ENCODE measurements at regions of chr9 and their contacts with region 1.

Region 1: DNA sequence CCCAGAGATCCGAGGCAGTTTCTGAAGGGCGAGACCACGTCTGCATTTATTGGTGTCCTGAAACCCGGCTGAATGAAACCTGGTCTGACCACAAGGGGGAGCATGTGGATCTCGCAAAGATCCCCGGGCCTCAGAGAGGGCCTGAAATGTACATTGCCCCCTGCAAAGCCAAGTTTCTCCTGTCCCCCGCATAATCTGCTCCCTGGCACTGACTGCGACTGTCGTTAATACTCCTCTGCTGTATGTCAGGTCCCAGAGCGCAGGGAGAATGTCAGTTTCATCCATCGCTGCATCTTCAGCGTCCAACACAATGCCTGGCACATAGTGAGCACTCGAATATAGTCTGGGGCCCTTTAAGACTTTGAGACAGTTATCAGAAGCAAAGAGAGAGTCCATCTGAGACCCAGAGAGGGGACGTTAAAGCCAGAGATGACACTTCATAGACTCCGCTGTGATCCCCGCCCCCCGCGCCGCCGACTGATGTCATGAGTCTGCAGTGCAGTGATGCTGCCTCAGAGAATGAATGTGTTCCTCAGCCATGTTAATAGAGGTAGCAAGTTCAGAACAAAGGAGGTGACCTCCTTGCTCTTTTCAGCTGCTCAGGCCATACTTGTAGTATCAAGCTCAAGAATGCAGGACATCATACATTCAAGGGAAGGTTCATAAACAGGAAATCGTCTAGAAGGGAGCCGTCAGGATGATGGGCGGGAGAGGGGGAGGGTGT is 74.5 kb upstream of the BARHL1 start:
- DNase-seq: peak; percentile 35
- ATAC-seq: peak; percentile 82
- H3K4me3 ChIP-seq: no peak overlapping the region
- H3K27ac ChIP-seq: no peak overlapping the region
- H3K4me1 ChIP-seq: no peaks in the 10 kb centered on the region
- H3K27me3 ChIP-seq: peaks cover 9 to 69% of the 10 kb centered on the region in 2 experiments
- CTCF ChIP-seq: peak; percentile 83
- EP300 ChIP-seq: no peak
- POLR2A ChIP-seq: no peak
- RAD21 ChIP-seq: peak; percentile 72

Region 2: GRCh38 chr9:132114102-132114707 is 393.7 kb before region 1 on chr9:
- CTCF ChIA-PET with region 1: no interaction called
- POLR2A ChIA-PET with region 1: no interaction called
- in situ Hi-C with region 1: no loop called
- intact Hi-C with region 1: no loop called
- DNase-seq: peak; percentile 40
- ATAC-seq: peak; percentile 93
- H3K4me3 ChIP-seq: no peak overlapping the region
- H3K27ac ChIP-seq: no peak overlapping the region
- H3K4me1 ChIP-seq: no peaks in the 10 kb centered on the region
- H3K27me3 ChIP-seq: no peaks in the 10 kb centered on the region; a peak in 1 of 5 replicates
- CTCF ChIP-seq: no peak
- EP300 ChIP-seq: no peak
- POLR2A ChIP-seq: no peak
- RAD21 ChIP-seq: no peak

Region 3: DNA sequence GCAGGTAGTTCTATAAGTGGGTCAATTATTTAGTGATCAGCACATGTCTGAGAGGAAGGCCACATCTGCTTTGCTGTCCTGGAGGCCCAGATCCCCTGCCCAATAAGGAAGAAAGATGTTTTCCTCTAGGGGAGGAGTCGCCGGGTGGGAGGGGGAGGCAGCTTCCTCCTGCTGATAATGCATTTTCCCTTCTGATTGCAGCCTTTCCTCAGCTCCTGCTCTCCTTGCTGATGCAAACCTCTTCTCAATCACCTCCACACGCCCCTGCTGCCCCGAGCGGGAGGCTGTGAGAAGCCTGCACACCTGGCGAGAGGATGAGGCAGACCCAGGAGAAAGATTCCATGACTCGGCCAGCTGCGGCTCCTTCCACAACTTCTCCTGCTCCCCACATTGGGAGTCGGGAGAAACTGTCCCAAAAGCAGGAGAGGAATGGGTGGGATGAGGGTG is 353.0 kb before region 1 on chr9:
- CTCF ChIA-PET with region 1: no interaction called
- POLR2A ChIA-PET with region 1: no interaction called
- in situ Hi-C with region 1: no loop called
- intact Hi-C with region 1: no loop called
- DNase-seq: no peak
- ATAC-seq: no peak
- H3K4me3 ChIP-seq: no peak overlapping the region
- H3K27ac ChIP-seq: no peak overlapping the region
- H3K4me1 ChIP-seq: no peaks in the 10 kb centered on the region
- H3K27me3 ChIP-seq: peaks cover 9 to 88% of the 10 kb centered on the region in 2 experiments
- CTCF ChIP-seq: no peak
- EP300 ChIP-seq: no peak
- POLR2A ChIP-seq: no peak
- RAD21 ChIP-seq: no peak

Region 4: GRCh38 chr9:132464547-132464946 is 43.4 kb before region 1 on chr9:
- CTCF ChIA-PET with region 1: no interaction called
- POLR2A ChIA-PET with region 1: no interaction called
- in situ Hi-C with region 1: no loop called
- intact Hi-C with region 1: no loop called
- DNase-seq: no peak
- ATAC-seq: no peak
- H3K4me3 ChIP-seq: no peak overlapping the region
- H3K27ac ChIP-seq: no peak overlapping the region
- H3K4me1 ChIP-seq: no peaks in the 10 kb centered on the region
- H3K27me3 ChIP-seq: peaks cover 0 to 29% of the 10 kb centered on the region in 2 experiments; a peak in 4 of 5 replicates
- CTCF ChIP-seq: no peak
- EP300 ChIP-seq: no peak
- POLR2A ChIP-seq: no peak
- RAD21 ChIP-seq: no peak

Region 5: DNA sequence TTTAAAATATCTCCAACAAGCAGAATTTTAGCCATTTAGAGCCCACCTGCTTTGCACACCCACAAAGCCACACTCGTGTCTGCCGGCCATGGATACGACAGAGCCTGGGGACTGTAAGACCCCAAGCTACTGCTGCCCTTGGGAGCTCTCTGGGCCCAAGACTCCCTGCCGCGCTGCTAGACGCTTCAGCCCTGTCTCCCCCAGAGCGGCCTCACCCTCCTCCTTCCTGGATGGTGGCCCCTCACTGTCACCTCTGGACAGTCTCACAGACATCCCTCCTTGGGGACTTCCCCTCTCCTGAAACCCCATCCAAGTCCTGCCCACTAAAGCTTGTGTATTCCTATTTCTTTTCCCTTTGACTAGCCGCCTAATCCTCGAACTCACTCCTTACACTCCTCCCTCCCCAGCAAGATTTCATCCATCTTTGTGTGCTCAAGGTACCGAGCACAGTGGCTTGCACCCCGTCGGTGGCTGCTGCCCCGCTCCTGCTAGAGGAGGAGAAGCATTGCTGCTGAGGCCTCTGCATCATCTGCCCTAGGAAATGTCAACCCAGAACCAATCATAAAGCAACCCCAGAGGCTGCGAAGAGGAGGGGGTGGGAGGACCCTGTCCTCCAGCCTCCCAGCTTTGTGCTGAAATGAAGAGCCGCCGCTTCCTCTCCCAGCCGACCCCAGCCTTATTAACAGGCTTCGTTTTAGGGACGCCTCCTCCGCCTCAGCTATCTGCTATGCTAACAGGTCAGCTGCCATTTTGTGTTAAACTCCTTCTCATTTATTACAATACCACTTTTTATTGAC is 26.7 kb before region 1 on chr9:
- CTCF ChIA-PET with region 1: no interaction called
- POLR2A ChIA-PET with region 1: no interaction called
- in situ Hi-C with region 1: no loop called
- intact Hi-C with region 1: no loop called
- DNase-seq: no peak
- ATAC-seq: no peak
- H3K4me3 ChIP-seq: no peak overlapping the region
- H3K27ac ChIP-seq: no peak overlapping the region
- H3K4me1 ChIP-seq: no peaks in the 10 kb centered on the region
- H3K27me3 ChIP-seq: peaks cover 0 to 20% of the 10 kb centered on the region in 2 experiments; a peak in 2 of 5 replicates
- CTCF ChIP-seq: no peak
- EP300 ChIP-seq: no peak
- POLR2A ChIP-seq: no peak
- RAD21 ChIP-seq: no peak

Region 6: DNA sequence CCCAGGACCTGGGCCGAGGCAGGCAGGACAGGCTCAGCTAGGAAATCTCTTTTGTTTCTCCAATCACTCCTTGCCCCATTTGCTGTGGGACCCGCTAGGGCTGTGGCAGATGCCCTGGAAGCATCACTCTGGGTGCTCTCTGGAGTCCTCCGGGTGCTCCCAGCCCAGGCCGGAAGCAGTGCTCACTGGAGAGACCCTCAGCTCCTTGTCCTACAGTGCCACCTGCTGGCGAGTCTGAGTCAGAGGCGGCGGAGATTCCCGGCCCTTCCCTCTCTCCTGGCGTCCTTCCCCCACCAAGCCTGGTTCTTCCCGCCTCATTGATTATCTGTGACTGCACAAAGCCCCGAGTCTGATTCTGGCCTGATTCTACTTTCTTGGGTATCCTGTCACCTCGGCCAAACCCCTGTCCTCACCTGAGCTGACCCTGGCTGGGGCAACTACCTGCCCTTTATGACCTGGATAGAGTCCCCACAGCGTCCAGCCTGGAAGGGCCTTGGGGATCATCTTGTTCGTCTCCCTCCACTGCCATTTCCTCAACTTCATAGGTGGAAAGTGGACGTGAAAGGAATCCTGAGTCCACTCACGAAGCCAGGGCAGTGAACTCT is 67.2 kb after region 1 on chr9:
- CTCF ChIA-PET with region 1: interaction called, 17 read pairs
- POLR2A ChIA-PET with region 1: no interaction called
- in situ Hi-C with region 1: loop called (anchors 5 kb)
- intact Hi-C with region 1: loop called (anchors 1 kb)
- DNase-seq: peak; percentile 48
- ATAC-seq: peak; percentile 93
- H3K4me3 ChIP-seq: no peak overlapping the region
- H3K27ac ChIP-seq: no peak overlapping the region
- H3K4me1 ChIP-seq: no peaks in the 10 kb centered on the region
- H3K27me3 ChIP-seq: peaks cover 7 to 30% of the 10 kb centered on the region in 2 experiments
- CTCF ChIP-seq: peak; percentile 93
- EP300 ChIP-seq: no peak
- POLR2A ChIP-seq: no peak
- RAD21 ChIP-seq: peak; percentile 92

Region 7: DNA sequence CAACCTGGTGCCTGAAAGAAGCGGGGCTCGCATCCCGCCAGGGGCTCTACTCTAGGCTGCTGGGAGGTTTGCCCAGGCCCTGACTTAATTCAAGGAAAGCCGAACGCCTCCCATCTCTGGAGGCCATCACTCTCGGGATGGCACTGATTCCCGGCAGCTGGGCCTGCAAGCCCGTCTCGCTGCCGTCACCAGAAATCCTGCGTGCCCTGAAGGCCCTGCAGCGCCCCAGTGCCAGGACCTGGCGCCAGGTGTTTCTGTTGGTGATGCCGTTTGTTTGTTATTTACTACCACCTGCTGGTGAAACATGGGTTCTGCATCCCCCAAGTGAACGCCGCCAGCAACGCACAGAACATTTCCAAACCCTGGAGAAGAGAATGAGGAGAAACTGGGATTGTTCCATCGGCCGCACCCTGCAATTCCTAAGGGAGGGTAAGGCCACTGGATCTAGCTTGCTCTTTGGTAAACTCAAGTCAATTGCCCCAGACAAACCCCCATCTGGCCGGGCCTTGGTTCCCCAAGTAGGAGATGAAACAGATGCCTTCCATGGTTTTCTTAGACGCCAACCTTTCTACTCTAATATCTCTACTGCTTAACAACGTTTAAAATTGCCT is 292.2 kb after region 1 on chr9:
- CTCF ChIA-PET with region 1: interaction called, 3 read pairs
- POLR2A ChIA-PET with region 1: no interaction called
- in situ Hi-C with region 1: no loop called
- intact Hi-C with region 1: loop called (anchors 1 kb)
- DNase-seq: peak; percentile 54
- ATAC-seq: peak; percentile 74
- H3K4me3 ChIP-seq: no peak overlapping the region
- H3K27ac ChIP-seq: no peak overlapping the region
- H3K4me1 ChIP-seq: peaks cover 19% of the 10 kb centered on the region
- H3K27me3 ChIP-seq: peaks cover 4 to 40% of the 10 kb centered on the region in 2 experiments; a peak in 4 of 5 replicates
- CTCF ChIP-seq: peak; percentile 90
- EP300 ChIP-seq: no peak
- POLR2A ChIP-seq: no peak
- RAD21 ChIP-seq: peak; percentile 89

Measured in HepG2 (cell line).